ENCODE measurements at regions of chr5 and their contacts with region 1.

Region 1: DNA sequence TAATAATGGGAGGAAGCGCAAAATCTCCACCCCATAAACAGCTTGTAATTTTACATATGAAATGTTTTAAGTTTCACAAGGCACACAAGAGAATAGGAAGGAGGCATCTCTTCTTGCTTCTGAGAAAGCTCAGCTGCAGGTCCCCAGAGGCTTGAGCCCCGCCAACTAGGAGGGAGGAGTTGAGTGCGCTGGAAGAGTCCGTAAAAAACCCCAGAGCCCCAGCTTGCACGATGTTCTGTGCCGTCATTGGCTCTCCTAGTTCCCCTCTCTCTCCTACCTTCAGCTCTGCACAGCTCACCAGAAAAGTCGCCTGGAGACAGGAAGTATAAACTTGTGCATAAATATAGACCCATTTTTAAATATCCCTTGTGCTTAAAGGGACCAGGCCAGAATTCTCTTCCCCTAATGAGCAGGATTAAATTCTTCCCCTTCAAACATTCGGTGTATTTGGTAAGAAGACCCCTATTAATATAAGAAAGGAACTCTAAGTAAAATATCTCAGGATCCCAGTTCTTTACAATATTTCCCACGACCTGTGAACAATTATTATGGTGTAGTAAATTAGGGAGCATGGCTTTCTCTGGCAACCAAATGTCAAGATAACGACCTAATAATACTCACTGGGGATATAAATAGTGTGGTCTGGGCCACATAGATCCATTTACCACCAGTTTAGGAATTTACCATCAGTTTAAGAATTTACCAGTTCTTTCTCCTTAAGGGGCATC is 13.7 kb downstream of the GLRX start:
- DNase-seq: peak; percentile 77 to 94 (median 88)
- H3K4me3 ChIP-seq: no peak overlapping the region
- H3K4me3 Mint-ChIP-seq: peak overlapping the region; percentile 57 to 87 (median 72)
- H3K27ac ChIP-seq: peak overlapping the region; percentile 67
- H3K27ac Mint-ChIP-seq: peak overlapping the region; percentile 66 to 95 (median 91)
- H3K4me1 ChIP-seq: peaks cover 59% of the 10 kb centered on the region
- H3K4me1 Mint-ChIP-seq: peaks cover 46 to 66% (median 56%) of the 10 kb centered on the region in 4 donors
- H3K27me3 ChIP-seq: no peaks in the 10 kb centered on the region
- H3K27me3 Mint-ChIP-seq: no peaks in the 10 kb centered on the region

Region 2: DNA sequence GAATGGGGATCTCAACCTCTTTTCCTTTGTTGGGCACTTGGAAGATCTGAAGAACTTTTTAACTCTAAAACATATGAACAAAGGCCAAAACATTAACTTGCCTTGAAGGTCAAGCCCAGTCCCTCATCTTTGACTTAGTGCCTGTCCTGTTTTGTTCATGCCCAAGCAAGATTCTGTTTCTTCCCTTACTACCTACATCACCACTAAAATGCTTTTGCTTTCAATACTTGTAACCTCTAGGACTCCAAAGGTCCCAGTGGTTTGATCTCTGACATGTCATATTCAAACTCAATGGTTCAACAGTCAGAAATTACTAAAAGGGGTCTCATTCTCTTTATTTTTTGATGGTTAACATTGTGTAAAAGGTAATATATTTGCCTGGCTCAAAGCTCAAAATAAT is 10.3 kb before region 1 on chr5:
- CTCF ChIA-PET with region 1: no interaction called
- POLR2A ChIA-PET with region 1: no interaction called
- intact Hi-C with region 1: no loop called
- DNase-seq: no peak
- H3K4me3 ChIP-seq: no peak overlapping the region
- H3K4me3 Mint-ChIP-seq: no peak overlapping the region
- H3K27ac ChIP-seq: no peak overlapping the region
- H3K27ac Mint-ChIP-seq: no peak overlapping the region
- H3K4me1 ChIP-seq: no peaks in the 10 kb centered on the region
- H3K4me1 Mint-ChIP-seq: peaks cover 0 to 4% (median 4%) of the 10 kb centered on the region in 4 donors
- H3K27me3 ChIP-seq: no peaks in the 10 kb centered on the region
- H3K27me3 Mint-ChIP-seq: no peaks in the 10 kb centered on the region

Region 3: DNA sequence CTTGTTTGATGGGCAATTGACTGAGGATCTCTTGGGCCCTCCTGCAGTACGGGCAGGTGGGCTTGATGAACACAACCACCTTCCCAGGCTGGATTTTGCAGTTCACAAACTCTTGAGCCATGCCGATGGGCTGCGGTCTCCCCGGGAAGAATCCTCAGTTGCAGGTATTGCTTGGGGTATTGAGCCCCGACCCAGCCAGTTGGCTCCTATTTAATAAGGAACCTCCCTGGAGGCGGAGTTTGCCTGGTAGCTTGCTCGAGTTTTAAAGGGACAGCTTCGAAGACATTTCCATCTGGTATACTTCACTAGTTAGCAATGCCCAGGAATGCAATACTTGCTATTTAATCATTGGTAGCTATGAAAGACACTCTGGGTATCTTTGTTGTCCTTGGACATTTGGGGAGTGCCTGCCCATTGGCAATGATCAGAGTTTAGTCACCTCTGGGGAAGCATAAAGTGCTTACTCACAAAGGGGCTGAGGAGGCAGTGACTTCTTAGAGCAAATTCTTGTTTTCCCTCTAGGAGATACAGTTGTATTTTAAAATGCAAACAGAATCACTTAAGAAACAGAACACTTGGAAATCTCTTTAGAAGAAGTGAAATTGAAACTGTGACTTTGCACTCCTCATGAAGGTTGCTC is 13.8 kb after region 1 on chr5 and contains the start of gene GLRX:
- CTCF ChIA-PET with region 1: interaction called, 70 read pairs
- POLR2A ChIA-PET with region 1: interaction called, 140 read pairs
- intact Hi-C with region 1: loop called (anchors 1 kb)
- DNase-seq: peak; percentile 56 to 71 (median 64)
- H3K4me3 ChIP-seq: peak within 1 kb of the TSS; percentile 89 to 91
- H3K4me3 Mint-ChIP-seq: peak within 1 kb of the TSS; percentile 98 to 100 (median 99)
- H3K27ac ChIP-seq: peak within 1 kb of the TSS; percentile 79
- H3K27ac Mint-ChIP-seq: peak within 1 kb of the TSS; percentile 76 to 99 (median 97)
- H3K4me1 ChIP-seq: peaks cover 72% of the 10 kb centered on the region
- H3K4me1 Mint-ChIP-seq: peaks cover 55 to 87% (median 60%) of the 10 kb centered on the region in 4 donors
- H3K27me3 ChIP-seq: no peaks in the 10 kb centered on the region
- H3K27me3 Mint-ChIP-seq: no peaks in the 10 kb centered on the region
- total RNA-seq, gene GLRX: 73.9 to 75.9 TPM

Measured in CD4-positive, alpha-beta memory T cell (primary cell).